ENCODE measurements at regions of chr2 and their contacts with region 1.

Region 1: GRCh38 chr2:121530212-121530705 is 421 bp upstream of the RNU4ATAC start:
- DNase-seq: peak; percentile 57 to 67
- ATAC-seq: peak; percentile 68 to 73
- H3K4me3 ChIP-seq: peak overlapping the region; percentile 68 to 80 (median 70)
- H3K27ac ChIP-seq: peak overlapping the region; percentile 85 to 95 (median 92)
- H3K4me1 ChIP-seq: peaks cover 55 to 60% of the 10 kb centered on the region in 2 donors
- H3K27me3 ChIP-seq: no peaks in the 10 kb centered on the region
- CTCF ChIP-seq: no peak
- POLR2A ChIP-seq: no peak

Region 2: GRCh38 chr2:121184248-121184862 is 345.9 kb before region 1 on chr2:
- in situ Hi-C with region 1: no loop called
- intact Hi-C with region 1: no loop called
- DNase-seq: no peak
- ATAC-seq: no peak
- H3K4me3 ChIP-seq: no peak overlapping the region
- H3K27ac ChIP-seq: peak overlapping the region in 3 of 4 donors; percentile 72 to 85 (median 73)
- H3K4me1 ChIP-seq: peaks cover 5 to 23% of the 10 kb centered on the region in 2 donors
- H3K27me3 ChIP-seq: no peaks in the 10 kb centered on the region
- CTCF ChIP-seq: peak in 1 of 5 experiments; percentile 8
- POLR2A ChIP-seq: no peak

Region 3: GRCh38 chr2:121297217-121297830 is 232.9 kb before region 1 on chr2:
- in situ Hi-C with region 1: no loop called
- intact Hi-C with region 1: no loop called
- DNase-seq: no peak
- ATAC-seq: peak; percentile 36 to 82
- H3K4me3 ChIP-seq: no peak overlapping the region
- H3K27ac ChIP-seq: no peak overlapping the region
- H3K4me1 ChIP-seq: no peaks in the 10 kb centered on the region
- H3K27me3 ChIP-seq: peaks cover 0 to 2% (median 0%) of the 10 kb centered on the region in 3 donors
- CTCF ChIP-seq: peak in 4 of 5 experiments; percentile 28 to 59 (median 44)
- POLR2A ChIP-seq: no peak

Region 4: DNA sequence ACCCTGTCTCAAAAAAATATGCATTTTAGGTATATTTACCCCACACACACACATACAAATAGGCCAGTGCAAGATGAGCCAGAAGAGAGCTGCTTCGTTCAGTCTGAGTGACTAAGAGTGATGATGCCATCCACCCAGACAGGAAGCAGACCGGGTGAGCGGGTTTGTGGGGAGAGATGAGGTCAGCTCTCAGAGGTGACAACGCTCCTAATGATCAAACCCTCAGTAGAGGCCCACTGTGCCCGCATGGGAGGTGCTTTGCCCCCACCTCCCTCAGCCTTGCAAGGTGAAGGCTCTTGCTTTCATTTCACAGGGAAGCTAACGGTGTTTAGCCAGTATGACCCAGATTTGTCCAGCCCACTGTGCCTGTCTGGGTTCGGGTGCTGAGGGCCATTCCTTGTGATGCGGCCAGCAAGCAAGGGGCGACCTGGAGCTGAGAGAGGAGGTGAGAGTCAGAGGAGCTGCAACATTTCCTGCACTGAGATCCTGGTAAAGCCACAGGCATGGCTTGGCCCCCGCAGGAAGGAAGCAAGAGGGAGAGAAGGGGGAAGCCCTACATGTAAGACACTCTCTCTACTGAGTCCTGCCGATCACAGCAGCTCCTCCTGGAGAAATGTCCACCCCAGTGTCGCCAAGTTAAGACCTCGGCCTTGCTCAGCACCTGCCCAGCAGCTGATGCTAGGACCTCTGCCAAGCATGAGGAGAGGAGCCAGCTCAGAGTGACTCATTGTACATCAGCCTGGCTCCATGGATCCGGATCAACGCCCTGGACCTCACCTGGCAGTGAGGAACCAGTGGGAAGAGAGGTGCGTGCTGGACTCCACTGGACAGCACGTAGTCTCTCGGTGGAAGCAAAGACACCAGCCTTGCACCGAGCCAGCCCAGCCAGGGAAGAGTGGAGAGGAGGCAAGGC is 169.4 kb after region 1 on chr2:
- in situ Hi-C with region 1: loop called in 2 of 4 experiments (anchors 25 kb)
- intact Hi-C with region 1: no loop called
- DNase-seq: peak; percentile 70 to 94
- ATAC-seq: peak; percentile 95 to 98
- H3K4me3 ChIP-seq: no peak overlapping the region
- H3K27ac ChIP-seq: peak overlapping the region; percentile 58 to 68 (median 64)
- H3K4me1 ChIP-seq: peaks cover 6 to 13% of the 10 kb centered on the region in 2 donors
- H3K27me3 ChIP-seq: no peaks in the 10 kb centered on the region
- CTCF ChIP-seq: no peak
- POLR2A ChIP-seq: no peak

Region 5: DNA sequence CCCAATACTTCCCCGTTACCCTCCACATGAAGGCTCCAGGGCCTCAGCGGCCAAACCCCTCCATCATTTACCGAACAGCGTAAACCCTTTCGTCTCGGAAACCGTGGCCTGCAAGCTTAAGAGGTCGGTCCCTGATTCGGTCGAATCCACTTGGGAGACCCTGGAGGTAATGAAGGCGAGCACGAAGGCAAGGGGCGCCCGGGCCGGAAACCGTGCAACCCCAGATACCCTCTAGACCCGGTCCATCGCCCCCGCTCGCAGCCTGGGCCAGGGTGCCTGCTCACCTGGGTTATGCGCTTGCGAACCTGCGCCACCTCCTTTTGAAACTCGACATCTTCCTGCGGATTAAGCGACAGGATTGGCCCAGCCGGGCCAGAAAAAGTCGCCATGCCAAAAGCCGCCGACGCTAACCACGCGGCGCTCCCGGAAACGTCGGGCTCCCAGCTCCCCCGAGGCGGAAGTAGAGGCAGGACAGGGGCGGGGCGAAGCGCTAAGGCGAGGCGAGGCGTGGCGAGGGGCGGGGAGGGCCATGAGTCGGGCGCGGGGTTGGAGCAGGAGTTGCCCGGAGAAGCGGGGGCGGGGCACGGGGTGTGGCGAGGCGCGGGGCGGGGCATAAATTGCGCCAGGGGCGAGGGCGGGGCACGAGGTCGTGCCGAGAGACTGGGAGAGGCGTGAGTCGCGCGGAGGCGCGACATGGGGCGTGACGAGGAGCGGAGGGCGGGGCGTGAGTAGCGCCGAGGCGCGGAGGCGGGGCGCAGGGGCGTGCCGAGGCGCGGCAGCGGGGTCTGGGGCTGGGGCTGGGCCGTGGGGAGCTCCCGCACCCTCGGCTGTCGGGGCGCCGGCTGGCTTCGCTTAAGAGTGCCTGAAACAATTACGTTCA is 206.4 kb after region 1 on chr2 and contains the start of gene NIFK:
- in situ Hi-C with region 1: no loop called
- intact Hi-C with region 1: loop called (anchors 5 kb)
- DNase-seq: peak; percentile 99
- ATAC-seq: peak; percentile 93
- H3K4me3 ChIP-seq: peak within 1 kb of the TSS; percentile 88 to 99 (median 93)
- H3K27ac ChIP-seq: peak within 1 kb of the TSS; percentile 85 to 95 (median 94)
- H3K4me1 ChIP-seq: peaks cover 9 to 17% of the 10 kb centered on the region in 2 donors
- H3K27me3 ChIP-seq: no peaks in the 10 kb centered on the region
- CTCF ChIP-seq: no peak
- POLR2A ChIP-seq: peak; percentile 80 to 89
- total RNA-seq, gene NIFK: 31.1 to 42.3 (median 37.3) TPM

Region 6: GRCh38 chr2:121755236-121756111 is 225.2 kb after region 1 on chr2 and contains the start of gene TSN:
- in situ Hi-C with region 1: no loop called
- intact Hi-C with region 1: loop called (anchors 2 kb)
- DNase-seq: peak; percentile 97
- ATAC-seq: peak; percentile 99
- H3K4me3 ChIP-seq: peak within 1 kb of the TSS; percentile 79 to 94 (median 90)
- H3K27ac ChIP-seq: peak within 1 kb of the TSS; percentile 76 to 89 (median 85)
- H3K4me1 ChIP-seq: peaks cover 29 to 32% of the 10 kb centered on the region in 2 donors
- H3K27me3 ChIP-seq: no peaks in the 10 kb centered on the region
- CTCF ChIP-seq: no peak
- POLR2A ChIP-seq: peak; percentile 43 to 50
- total RNA-seq, gene TSN: 31.8 to 49.3 (median 41.2) TPM

Measured in gastrocnemius medialis (tissue), 4 donors.